ENCODE measurements at regions of chr7 and their contacts with region 1.

Region 1: DNA sequence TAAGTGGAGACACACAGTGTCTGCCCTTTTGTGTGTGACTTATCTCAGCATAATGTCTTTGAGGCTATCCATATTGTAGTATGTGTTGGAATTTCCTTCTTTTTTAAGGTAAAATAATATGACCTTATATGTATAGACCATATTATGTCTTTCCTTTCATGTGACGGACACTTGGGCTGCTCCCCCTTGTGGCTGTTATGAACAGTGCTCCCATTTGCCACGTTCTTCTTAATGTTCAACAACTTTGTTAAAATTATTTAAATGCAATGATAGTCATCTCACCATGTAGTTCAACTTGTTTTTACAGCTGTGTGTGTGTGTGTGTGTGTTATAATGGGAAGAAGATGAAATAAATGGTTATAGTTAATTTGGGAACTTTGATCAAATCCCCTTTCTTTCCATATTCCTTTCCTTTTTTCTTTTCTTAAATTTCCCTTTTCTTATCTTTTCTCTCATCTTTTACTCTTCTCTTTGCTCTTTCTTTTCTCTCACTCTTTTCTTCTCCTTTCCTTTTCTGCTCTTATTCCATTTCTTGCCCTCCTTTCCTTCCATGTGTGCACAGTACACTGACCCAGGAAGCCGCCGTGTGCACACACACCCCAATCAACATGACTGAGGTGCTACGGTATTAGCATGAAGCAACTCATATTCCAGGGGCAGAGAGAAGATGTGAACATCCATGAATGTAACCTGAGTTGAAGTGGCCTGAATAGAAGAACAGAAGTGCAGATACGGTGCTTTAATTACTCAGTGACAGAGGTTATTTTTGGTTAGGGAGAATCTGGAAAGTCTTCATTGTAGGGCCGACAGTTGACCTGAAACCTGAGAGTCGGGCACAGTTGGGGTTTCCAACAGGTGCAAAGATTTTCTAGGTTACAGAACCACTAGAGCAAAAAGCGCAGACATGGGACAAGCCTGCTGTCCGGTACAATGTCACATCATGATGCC is 596.7 kb downstream of the SDK1 start:
- DNase-seq: no peak
- ATAC-seq: peak; percentile 92 to 96 (median 96)
- H3K4me3 ChIP-seq: no peak overlapping the region
- H3K27ac ChIP-seq: peak overlapping the region; percentile 72
- H3K4me1 ChIP-seq: peaks cover 32% of the 10 kb centered on the region
- H3K27me3 ChIP-seq: no peaks in the 10 kb centered on the region
- CTCF ChIP-seq: peak; percentile 68

Region 2: DNA sequence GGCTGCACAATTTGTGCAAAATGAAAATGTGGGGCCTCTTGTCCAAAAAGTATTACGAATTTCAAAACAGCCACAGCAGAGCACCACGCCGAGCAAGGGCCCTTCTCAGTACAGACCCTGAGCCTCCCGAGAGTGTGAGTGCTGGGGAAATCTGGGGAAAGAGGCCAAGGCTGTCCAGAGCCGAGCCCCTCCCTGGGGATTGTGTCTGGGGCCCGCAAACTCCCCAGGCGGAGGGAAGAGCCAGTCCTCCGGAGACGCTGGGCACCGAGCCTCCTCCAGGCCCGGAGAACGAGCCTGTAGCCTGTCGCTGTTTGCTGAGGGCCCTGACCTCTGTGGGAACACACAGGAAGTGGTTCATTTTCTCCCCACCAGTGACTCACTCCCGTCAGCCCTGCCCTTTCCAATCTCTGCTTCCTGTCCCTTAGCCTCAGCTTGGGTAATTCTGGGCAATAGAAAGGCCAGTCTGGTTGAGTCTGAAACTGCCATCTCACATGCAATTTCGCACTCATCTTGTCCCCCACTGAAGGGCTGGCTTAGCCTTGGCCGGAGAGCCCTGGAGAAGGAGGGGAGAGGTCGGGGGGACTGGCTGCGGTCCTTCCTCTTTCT is 1034.1 kb before region 1 on chr7:
- intact Hi-C with region 1: loop called in 1 of 2 experiments (anchors 10 kb)
- DNase-seq: peak; percentile 85 to 89
- ATAC-seq: peak; percentile 78 to 85 (median 84)
- H3K4me3 ChIP-seq: peak overlapping the region; percentile 25
- H3K27ac ChIP-seq: peak overlapping the region; percentile 74
- H3K4me1 ChIP-seq: peaks cover 15% of the 10 kb centered on the region
- H3K27me3 ChIP-seq: peaks cover 0 to 3% (median 0%) of the 10 kb centered on the region in 3 donors
- CTCF ChIP-seq: no peak

Region 3: GRCh38 chr7:3294432-3295100 is 603.1 kb before region 1 on chr7:
- intact Hi-C with region 1: loop called in 1 of 2 experiments (anchors 10 kb)
- DNase-seq: no peak
- ATAC-seq: no peak
- H3K4me3 ChIP-seq: no peak overlapping the region
- H3K27ac ChIP-seq: no peak overlapping the region
- H3K4me1 ChIP-seq: no peaks in the 10 kb centered on the region
- H3K27me3 ChIP-seq: peaks cover 0 to 1% (median 0%) of the 10 kb centered on the region in 3 donors
- CTCF ChIP-seq: no peak

Region 4: GRCh38 chr7:3300651-3301378 is 596.9 kb before region 1 on chr7 and contains the start of gene SDK1:
- intact Hi-C with region 1: loop called (anchors 10 kb)
- DNase-seq: peak; percentile 96
- ATAC-seq: peak; percentile 96 to 98 (median 97)
- H3K4me3 ChIP-seq: peak within 1 kb of the TSS; percentile 64
- H3K27ac ChIP-seq: no peak within 1 kb of the TSS
- H3K4me1 ChIP-seq: no peaks in the 10 kb centered on the region
- H3K27me3 ChIP-seq: peaks cover 0 to 18% (median 0%) of the 10 kb centered on the region in 3 donors
- CTCF ChIP-seq: peak; percentile 93
- total RNA-seq, gene SDK1: 1.3 to 2.4 (median 1.7) TPM

Region 5: GRCh38 chr7:3712841-3713240 is 184.9 kb before region 1 on chr7:
- intact Hi-C with region 1: no loop called
- DNase-seq: no peak
- ATAC-seq: no peak
- H3K4me3 ChIP-seq: no peak overlapping the region
- H3K27ac ChIP-seq: no peak overlapping the region
- H3K4me1 ChIP-seq: no peaks in the 10 kb centered on the region
- H3K27me3 ChIP-seq: peaks cover 0 to 2% (median 0%) of the 10 kb centered on the region in 3 donors
- CTCF ChIP-seq: no peak

Measured in psoas muscle (tissue), 8 donors.